ENCODE measurements at regions of chrX and their contacts with region 1.

Region 1: GRCh38 chrX:129726307-129727111 is 12.3 kb upstream of the XPNPEP2 start:
- H3K4me3 ChIP-seq: no peak overlapping the region
- H3K27ac ChIP-seq: no peak overlapping the region
- H3K4me1 ChIP-seq: no peaks in the 10 kb centered on the region
- CTCF ChIP-seq: peak; percentile 83

Region 2: DNA sequence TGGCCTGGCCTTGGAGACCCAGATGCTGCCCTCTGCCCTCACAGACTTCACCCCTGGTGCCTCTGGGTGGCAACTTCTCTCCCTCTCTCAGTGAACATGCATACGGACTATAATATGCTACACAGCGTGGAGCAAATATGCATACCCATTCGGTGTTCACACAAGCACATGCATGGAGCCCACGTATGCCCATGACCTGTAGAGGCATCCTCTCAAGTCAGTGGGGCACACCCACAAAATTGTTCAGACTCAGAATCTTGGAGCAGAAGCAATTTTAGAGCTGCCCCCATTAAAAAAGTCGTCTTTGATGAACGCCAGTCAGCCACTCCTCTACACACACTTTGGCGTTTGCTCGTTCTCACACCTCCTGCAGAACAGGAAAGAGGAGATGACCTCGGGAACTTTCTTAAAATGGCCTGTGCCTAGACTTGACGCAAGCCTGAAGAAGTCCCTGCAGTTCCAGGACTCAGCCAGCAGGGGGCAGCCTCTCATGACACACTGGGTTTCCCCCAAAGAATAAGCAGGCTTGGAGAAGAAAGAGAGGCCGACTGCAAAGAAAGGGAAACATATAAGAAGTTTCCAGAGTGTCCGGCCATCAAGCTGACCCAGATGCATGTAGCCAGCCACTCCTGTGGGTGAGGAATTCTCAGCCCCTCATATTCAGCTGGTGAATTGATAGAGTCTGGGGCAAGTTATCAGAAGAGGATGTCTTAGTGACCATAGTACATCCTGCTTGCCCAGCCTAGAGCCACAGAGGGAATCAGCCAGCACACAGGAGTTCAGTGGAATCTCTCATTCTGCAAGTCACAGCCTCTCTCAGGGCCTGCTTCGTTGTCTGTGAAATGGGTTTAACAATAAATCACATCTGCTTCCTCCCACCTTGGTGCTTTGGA is 89.0 kb before region 1 on chrX:
- CTCF ChIA-PET with region 1: interaction called, 154 read pairs
- POLR2A ChIA-PET with region 1: interaction called, 6 read pairs
- H3K4me3 ChIP-seq: no peak overlapping the region
- H3K27ac ChIP-seq: no peak overlapping the region
- H3K4me1 ChIP-seq: no peaks in the 10 kb centered on the region
- CTCF ChIP-seq: peak; percentile 71

Region 3: GRCh38 chrX:129654419-129655165 is 71.9 kb before region 1 on chrX and contains the start of gene APLN:
- CTCF ChIA-PET with region 1: interaction called, 16 read pairs
- POLR2A ChIA-PET with region 1: no interaction called
- H3K4me3 ChIP-seq: peak within 1 kb of the TSS; percentile 35
- H3K27ac ChIP-seq: peak within 1 kb of the TSS; percentile 21; the same call in 1 of the 2 replicates
- H3K4me1 ChIP-seq: no peaks in the 10 kb centered on the region; the same call in 1 of the 2 replicates
- CTCF ChIP-seq: no peak; the same call in 1 of the 2 replicates

Region 4: GRCh38 chrX:129737916-129738315 is 11.4 kb after region 1 on chrX:
- CTCF ChIA-PET with region 1: interaction called, 15 read pairs
- POLR2A ChIA-PET with region 1: no interaction called
- H3K4me3 ChIP-seq: no peak overlapping the region
- H3K27ac ChIP-seq: no peak overlapping the region
- H3K4me1 ChIP-seq: no peaks in the 10 kb centered on the region
- CTCF ChIP-seq: no peak

Measured in HEK293 (cell line).